Body of pancreas (tissue), 4 donors: ENCODE measurements at regions of chr17 and their contacts with region 1.

Region 1: DNA sequence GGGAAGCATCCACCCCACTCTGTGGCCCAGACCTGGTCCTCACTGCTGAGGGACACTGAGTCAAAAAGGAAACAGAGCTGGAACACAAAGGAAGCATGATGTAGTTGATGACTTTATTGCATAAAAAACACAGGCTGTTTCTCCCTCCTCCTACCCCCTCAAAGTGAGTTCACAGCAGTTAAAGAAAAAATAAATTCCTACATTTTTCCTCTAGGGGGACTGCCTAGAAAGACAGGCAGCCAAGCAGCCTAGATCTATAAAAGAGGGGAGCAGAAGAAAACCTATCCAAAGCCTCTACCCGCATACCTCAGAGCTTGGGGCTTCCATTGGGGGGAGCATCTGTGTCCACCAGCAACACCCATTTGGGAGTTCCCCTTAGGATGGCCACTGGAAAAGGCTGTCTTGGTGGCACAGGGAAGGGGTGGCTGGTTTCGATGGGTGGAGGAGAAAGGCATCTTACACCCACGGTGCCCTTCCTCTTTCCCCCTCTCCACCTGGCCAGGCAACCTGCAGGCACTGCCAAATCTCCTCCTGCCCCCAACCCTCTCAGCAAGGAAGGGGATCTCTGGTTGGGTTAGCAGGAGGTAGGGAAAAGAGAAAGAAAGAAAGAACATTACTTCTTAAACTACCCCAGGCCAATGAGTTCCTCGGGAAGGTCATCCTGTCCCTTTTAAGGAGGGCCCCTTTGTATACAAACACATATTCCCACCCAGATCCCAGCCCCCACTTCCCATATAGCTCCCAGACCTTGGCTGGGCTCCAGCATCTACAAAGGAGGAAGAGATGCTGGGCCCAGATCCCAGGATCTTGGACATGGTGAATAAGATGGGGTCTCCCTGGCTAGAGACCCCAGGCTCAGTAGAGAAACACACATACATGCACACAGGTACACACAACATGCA is 4.0 kb upstream of the SCRN2 start:
- DNase-seq: no peak
- ATAC-seq: no peak
- H3K4me3 ChIP-seq: no peak overlapping the region
- H3K27ac ChIP-seq: no peak overlapping the region
- H3K4me1 ChIP-seq: peaks cover 43% of the 10 kb centered on the region
- H3K27me3 ChIP-seq: peaks cover 0 to 18% of the 10 kb centered on the region in 2 donors
- CTCF ChIP-seq: peak in 4 of 7 experiments; percentile 3 to 11 (median 8)
- POLR2A ChIP-seq: no peak

Region 2: GRCh38 chr17:47885734-47886309 is 40.8 kb after region 1 on chr17:
- intact Hi-C with region 1: loop called (anchors 2 kb)
- DNase-seq: no peak
- ATAC-seq: no peak
- H3K4me3 ChIP-seq: no peak overlapping the region
- H3K27ac ChIP-seq: no peak overlapping the region
- H3K4me1 ChIP-seq: no peaks in the 10 kb centered on the region
- H3K27me3 ChIP-seq: no peaks in the 10 kb centered on the region
- CTCF ChIP-seq: no peak
- POLR2A ChIP-seq: no peak